ENCODE measurements at regions of chr5 and their contacts with region 1.

Region 1: GRCh38 chr5:150217873-150218692 is 28.2 kb downstream of the SLC6A7 start:
- DNase-seq: peak; percentile 91
- H3K4me3 Mint-ChIP-seq: no peak overlapping the region
- H3K27ac Mint-ChIP-seq: no peak overlapping the region
- H3K4me1 Mint-ChIP-seq: peaks cover 7% of the 10 kb centered on the region
- H3K27me3 Mint-ChIP-seq: peaks cover 26% of the 10 kb centered on the region
- CTCF ChIP-seq: peak; percentile 88

Region 2: GRCh38 chr5:149834246-149834855 is 383.7 kb before region 1 on chr5:
- CTCF ChIA-PET with region 1: no interaction called
- intact Hi-C with region 1: loop called (anchors 10 kb)
- DNase-seq: peak; percentile 79
- H3K4me3 Mint-ChIP-seq: no peak overlapping the region
- H3K27ac Mint-ChIP-seq: no peak overlapping the region
- H3K4me1 Mint-ChIP-seq: no peaks in the 10 kb centered on the region
- H3K27me3 Mint-ChIP-seq: no peaks in the 10 kb centered on the region
- CTCF ChIP-seq: peak; percentile 73

Region 3: GRCh38 chr5:150129813-150130492 is 88.1 kb before region 1 on chr5:
- CTCF ChIA-PET with region 1: no interaction called
- intact Hi-C with region 1: loop called (anchors 1 kb)
- DNase-seq: peak; percentile 84
- H3K4me3 Mint-ChIP-seq: peak overlapping the region; percentile 61
- H3K27ac Mint-ChIP-seq: no peak overlapping the region
- H3K4me1 Mint-ChIP-seq: peaks cover 8% of the 10 kb centered on the region
- H3K27me3 Mint-ChIP-seq: peaks cover 22% of the 10 kb centered on the region
- CTCF ChIP-seq: peak; percentile 94

Region 4: DNA sequence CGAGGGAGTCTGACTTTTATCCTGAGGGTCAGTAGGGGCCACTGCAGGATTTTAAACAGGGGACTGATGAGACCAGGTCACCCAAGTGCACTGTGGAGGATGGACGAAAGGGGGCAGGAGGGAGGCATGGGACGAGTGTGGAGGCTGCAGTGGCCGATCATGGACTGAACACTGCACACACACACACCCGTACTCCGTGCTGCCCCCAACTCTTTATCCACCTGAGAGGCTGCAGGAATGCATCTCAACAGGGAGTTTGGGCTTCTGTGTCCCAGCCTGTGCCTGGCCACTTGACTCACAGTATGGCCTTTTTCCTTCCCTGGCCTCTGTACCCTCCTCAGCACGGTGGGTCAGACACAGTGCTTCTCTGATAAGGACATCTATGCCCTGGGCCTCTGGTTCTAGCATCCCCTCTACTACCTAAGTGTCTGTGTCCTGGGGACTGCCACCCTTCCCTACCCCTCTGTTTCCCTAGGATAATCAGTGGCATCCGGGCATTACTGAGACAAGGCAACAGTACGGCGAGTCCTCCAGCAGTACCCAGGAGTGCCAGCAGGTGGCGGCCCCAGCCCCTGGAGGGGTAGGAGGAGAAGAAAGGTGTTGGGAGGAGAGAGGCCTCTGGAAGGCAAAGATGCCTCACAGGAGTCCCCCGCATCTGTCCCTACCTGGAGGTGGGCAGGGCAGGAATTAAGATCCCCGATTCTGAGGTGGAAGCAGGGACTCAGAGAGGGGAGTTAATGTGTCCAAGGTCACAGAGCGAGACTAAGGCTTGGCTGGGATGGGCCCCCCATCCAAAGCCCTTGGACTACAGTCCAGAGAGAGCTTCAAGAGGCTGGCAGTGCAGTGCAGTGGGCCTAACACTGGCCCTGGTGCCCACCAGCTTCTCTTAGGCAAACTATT is 56.6 kb before region 1 on chr5:
- CTCF ChIA-PET with region 1: interaction called, 7 read pairs
- intact Hi-C with region 1: loop called (anchors 1 kb)
- DNase-seq: peak; percentile 97
- H3K4me3 Mint-ChIP-seq: no peak overlapping the region
- H3K27ac Mint-ChIP-seq: no peak overlapping the region
- H3K4me1 Mint-ChIP-seq: peaks cover 26% of the 10 kb centered on the region
- H3K27me3 Mint-ChIP-seq: peaks cover 17% of the 10 kb centered on the region
- CTCF ChIP-seq: peak; percentile 96